ENCODE measurements at regions of chr5 and their contacts with region 1.

Region 1: GRCh38 chr5:59264639-59265240 is 628.8 kb downstream of the PDE4D start:
- DNase-seq: no peak
- H3K4me3 ChIP-seq: no peak overlapping the region
- H3K27ac ChIP-seq: peak overlapping the region in 1 of 2 donors; percentile 24
- H3K4me1 ChIP-seq: no peaks in the 10 kb centered on the region
- H3K27me3 ChIP-seq: no peaks in the 10 kb centered on the region
- CTCF ChIP-seq: no peak
- POLR2A ChIP-seq: no peak

Region 2: GRCh38 chr5:59206132-59206581 is 58.6 kb before region 1 on chr5:
- intact Hi-C with region 1: loop called (anchors 5 kb)
- DNase-seq: no peak
- H3K4me3 ChIP-seq: no peak overlapping the region
- H3K27ac ChIP-seq: peak overlapping the region in 1 of 2 donors; percentile 34
- H3K4me1 ChIP-seq: no peaks in the 10 kb centered on the region
- H3K27me3 ChIP-seq: no peaks in the 10 kb centered on the region
- CTCF ChIP-seq: no peak
- POLR2A ChIP-seq: no peak

Region 3: GRCh38 chr5:59351076-59351794 is 86.5 kb after region 1 on chr5:
- intact Hi-C with region 1: no loop called
- DNase-seq: no peak
- H3K4me3 ChIP-seq: no peak overlapping the region
- H3K27ac ChIP-seq: peak overlapping the region in 1 of 2 donors; percentile 13
- H3K4me1 ChIP-seq: no peaks in the 10 kb centered on the region
- H3K27me3 ChIP-seq: no peaks in the 10 kb centered on the region
- CTCF ChIP-seq: peak in 3 of 4 experiments; percentile 13 to 21 (median 15)
- POLR2A ChIP-seq: no peak

Measured in prostate gland (tissue), 2 donors.